GM12878 (cell line): ENCODE measurements at regions of chr2 and their contacts with region 1.

Region 1: DNA sequence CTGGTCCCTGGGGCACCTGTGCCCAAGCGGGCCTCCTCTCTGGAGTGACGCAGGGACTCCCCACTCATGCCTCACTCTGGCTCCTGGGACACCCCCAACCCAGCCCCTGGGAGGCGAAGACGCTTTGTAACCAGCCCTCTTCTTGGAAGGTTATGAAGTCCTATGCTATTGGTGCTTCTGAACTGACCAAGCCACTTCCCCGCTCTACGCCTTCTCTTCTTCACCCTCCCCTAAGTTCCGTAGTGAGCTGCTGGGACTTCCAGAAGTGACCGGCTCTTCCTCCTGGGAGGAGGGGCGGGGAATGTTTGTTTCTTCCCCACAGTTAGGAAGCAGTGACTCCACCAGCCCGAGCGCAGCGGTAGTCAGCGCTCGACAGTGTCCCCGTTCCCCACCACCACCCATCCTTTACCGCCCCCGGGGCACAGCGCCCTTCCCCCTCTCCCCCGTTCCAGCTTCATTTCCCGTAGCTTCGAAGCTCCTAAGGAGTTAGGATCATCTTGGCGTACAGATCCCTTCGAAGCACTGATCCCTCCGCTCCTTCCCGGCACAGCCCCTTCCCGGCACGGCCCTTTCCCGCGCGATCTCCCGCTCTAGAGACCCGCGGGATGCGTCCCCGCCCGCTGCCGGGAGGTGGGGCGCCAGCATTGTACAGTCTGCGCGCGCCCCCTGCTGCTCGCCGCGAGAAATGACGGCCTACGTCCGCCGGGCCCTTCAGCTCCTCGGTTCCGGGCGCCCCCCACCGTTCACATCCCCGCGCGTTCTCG is 25.3 kb upstream of the NOTO start:
- DNase-seq: no peak
- ATAC-seq: peak; percentile 94
- H3K4me3 ChIP-seq: peak overlapping the region; percentile 59; the same call in 1 of the 2 replicates
- H3K27ac ChIP-seq: no peak overlapping the region
- H3K4me1 ChIP-seq: peaks cover 13% of the 10 kb centered on the region; the same call in 1 of the 2 replicates
- H3K27me3 ChIP-seq: peaks cover 13 to 14% of the 10 kb centered on the region in 2 experiments; a peak in 3 of 4 replicates
- CTCF ChIP-seq: peak; percentile 91 to 99 (median 97); a peak in 5 of 6 replicates
- EP300 ChIP-seq: no peak
- POLR2A ChIP-seq: no peak
- RAD21 ChIP-seq: peak; percentile 71

Region 2: DNA sequence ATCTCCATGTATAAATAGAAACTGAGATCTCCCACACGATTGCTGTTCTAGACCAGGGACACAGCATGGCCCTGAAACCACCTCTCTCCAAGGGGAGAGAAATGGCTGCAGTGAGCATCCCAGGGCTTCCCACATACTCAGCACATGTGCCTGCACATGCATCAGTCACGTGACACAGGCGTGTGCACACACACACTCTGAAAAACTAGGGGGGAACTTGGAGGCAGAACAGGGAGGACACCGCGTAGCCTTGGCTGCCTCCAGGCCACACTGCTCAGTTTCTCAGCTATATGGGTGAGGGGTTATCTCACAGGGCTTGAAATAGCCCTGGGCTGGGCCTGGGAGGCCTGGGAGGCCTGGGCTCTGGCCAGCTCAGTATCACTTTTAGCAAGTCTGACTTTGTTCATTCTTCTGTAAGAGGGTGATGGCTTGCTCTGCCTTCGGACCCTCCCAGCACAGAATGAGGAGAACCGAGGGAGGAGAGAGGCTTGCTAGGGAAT is 192.8 kb before region 1 on chr2:
- CTCF ChIA-PET with region 1: interaction called, 10 read pairs
- POLR2A ChIA-PET with region 1: no interaction called
- RAD21 ChIA-PET with region 1: no interaction called
- SMC1A ChIA-PET with region 1: interaction called, 5 read pairs
- in situ Hi-C with region 1: no loop called
- intact Hi-C with region 1: no loop called
- DNase-seq: no peak
- ATAC-seq: no peak
- H3K4me3 ChIP-seq: no peak overlapping the region
- H3K27ac ChIP-seq: no peak overlapping the region
- H3K4me1 ChIP-seq: no peaks in the 10 kb centered on the region
- H3K27me3 ChIP-seq: no peaks in the 10 kb centered on the region
- CTCF ChIP-seq: no peak
- EP300 ChIP-seq: no peak
- POLR2A ChIP-seq: no peak
- RAD21 ChIP-seq: no peak

Region 3: GRCh38 chr2:72999729-73000725 is 177.0 kb before region 1 on chr2:
- CTCF ChIA-PET with region 1: interaction called, 15 read pairs
- POLR2A ChIA-PET with region 1: no interaction called
- RAD21 ChIA-PET with region 1: interaction called, 11 read pairs
- SMC1A ChIA-PET with region 1: interaction called, 6 read pairs
- in situ Hi-C with region 1: no loop called
- intact Hi-C with region 1: no loop called
- DNase-seq: no peak
- ATAC-seq: no peak
- H3K4me3 ChIP-seq: no peak overlapping the region
- H3K27ac ChIP-seq: no peak overlapping the region
- H3K4me1 ChIP-seq: no peaks in the 10 kb centered on the region
- H3K27me3 ChIP-seq: no peaks in the 10 kb centered on the region
- CTCF ChIP-seq: no peak
- EP300 ChIP-seq: no peak
- POLR2A ChIP-seq: no peak
- RAD21 ChIP-seq: no peak

Region 4: DNA sequence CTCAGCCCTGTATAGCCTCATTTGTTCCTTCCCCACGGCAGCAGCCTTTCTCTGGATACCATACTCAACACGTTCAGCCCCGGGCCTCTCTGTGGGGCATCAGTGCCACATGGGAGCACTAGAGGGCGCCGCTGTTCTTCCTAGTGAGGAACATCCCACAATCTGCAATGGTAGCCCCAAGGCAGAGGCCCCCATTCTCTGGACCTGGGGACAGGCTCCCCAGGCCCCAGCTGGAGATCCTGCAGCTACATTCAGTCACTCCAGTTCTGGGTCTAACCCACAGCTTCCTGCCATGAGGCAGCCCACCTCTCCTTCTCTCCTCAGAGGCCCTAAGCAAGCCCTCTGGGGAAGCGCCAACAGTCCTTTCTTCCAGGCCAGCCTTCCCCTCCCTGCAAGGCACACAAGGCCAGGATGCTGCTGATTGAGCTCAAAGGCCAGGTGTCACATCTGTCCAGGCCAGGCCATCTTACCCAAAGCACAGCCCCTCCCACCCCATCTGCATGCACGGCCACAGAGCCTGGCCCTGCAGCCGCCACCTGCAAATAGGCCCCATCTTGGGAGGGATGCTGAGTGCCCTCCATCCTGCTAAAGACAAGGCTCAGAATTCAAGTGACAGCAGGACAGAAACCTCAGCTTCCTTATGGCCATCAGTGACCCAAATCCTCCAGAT is 91.2 kb before region 1 on chr2:
- CTCF ChIA-PET with region 1: interaction called, 25 read pairs
- POLR2A ChIA-PET with region 1: no interaction called
- RAD21 ChIA-PET with region 1: interaction called, 19 read pairs
- SMC1A ChIA-PET with region 1: interaction called, 4 read pairs
- in situ Hi-C with region 1: no loop called
- intact Hi-C with region 1: loop called (anchors 2 kb)
- DNase-seq: no peak
- ATAC-seq: peak; percentile 98
- H3K4me3 ChIP-seq: no peak overlapping the region
- H3K27ac ChIP-seq: no peak overlapping the region
- H3K4me1 ChIP-seq: no peaks in the 10 kb centered on the region
- H3K27me3 ChIP-seq: no peaks in the 10 kb centered on the region; a peak in 2 of 4 replicates
- CTCF ChIP-seq: peak; percentile 93 to 95 (median 94)
- EP300 ChIP-seq: no peak
- POLR2A ChIP-seq: no peak
- RAD21 ChIP-seq: peak; percentile 92

Region 5: GRCh38 chr2:73187549-73187948 is 10.5 kb after region 1 on chr2:
- CTCF ChIA-PET with region 1: interaction called, 11 read pairs
- POLR2A ChIA-PET with region 1: no interaction called
- RAD21 ChIA-PET with region 1: interaction called, 3 read pairs
- SMC1A ChIA-PET with region 1: no interaction called
- in situ Hi-C with region 1: no loop called
- intact Hi-C with region 1: no loop called
- DNase-seq: no peak
- ATAC-seq: no peak
- H3K4me3 ChIP-seq: no peak overlapping the region
- H3K27ac ChIP-seq: no peak overlapping the region
- H3K4me1 ChIP-seq: no peaks in the 10 kb centered on the region
- H3K27me3 ChIP-seq: no peaks in the 10 kb centered on the region; a peak in 1 of 4 replicates
- CTCF ChIP-seq: no peak
- EP300 ChIP-seq: no peak
- POLR2A ChIP-seq: no peak
- RAD21 ChIP-seq: no peak

Region 6: DNA sequence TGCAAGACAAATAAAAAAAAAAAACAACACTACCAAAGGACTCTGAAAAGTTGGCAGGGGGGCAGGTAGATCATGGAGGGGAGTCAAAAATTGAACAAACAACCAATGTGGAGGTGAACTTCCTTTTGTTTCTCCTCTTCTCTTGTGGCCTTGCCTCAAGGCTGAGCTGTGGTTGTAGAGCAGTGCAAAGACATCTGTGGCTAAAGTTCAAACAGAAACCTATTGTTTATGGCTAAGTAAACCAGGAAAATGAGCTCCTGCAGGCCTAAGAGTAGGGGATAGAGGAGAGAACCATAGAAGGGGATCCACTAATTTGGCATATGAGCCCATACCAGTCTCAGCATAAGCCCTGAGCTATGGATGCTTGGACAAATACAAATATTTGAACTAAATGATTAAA is 156.5 kb after region 1 on chr2:
- CTCF ChIA-PET with region 1: no interaction called
- POLR2A ChIA-PET with region 1: no interaction called
- RAD21 ChIA-PET with region 1: no interaction called
- SMC1A ChIA-PET with region 1: no interaction called
- in situ Hi-C with region 1: no loop called
- intact Hi-C with region 1: no loop called
- DNase-seq: no peak
- ATAC-seq: no peak
- H3K4me3 ChIP-seq: no peak overlapping the region
- H3K27ac ChIP-seq: no peak overlapping the region
- H3K4me1 ChIP-seq: peaks cover 3% of the 10 kb centered on the region; the same call in 1 of the 2 replicates
- H3K27me3 ChIP-seq: no peaks in the 10 kb centered on the region
- CTCF ChIP-seq: no peak
- EP300 ChIP-seq: no peak
- POLR2A ChIP-seq: no peak
- RAD21 ChIP-seq: no peak